A549 (cell line): ENCODE measurements at regions of chr17 and their contacts with region 1.

Region 1: DNA sequence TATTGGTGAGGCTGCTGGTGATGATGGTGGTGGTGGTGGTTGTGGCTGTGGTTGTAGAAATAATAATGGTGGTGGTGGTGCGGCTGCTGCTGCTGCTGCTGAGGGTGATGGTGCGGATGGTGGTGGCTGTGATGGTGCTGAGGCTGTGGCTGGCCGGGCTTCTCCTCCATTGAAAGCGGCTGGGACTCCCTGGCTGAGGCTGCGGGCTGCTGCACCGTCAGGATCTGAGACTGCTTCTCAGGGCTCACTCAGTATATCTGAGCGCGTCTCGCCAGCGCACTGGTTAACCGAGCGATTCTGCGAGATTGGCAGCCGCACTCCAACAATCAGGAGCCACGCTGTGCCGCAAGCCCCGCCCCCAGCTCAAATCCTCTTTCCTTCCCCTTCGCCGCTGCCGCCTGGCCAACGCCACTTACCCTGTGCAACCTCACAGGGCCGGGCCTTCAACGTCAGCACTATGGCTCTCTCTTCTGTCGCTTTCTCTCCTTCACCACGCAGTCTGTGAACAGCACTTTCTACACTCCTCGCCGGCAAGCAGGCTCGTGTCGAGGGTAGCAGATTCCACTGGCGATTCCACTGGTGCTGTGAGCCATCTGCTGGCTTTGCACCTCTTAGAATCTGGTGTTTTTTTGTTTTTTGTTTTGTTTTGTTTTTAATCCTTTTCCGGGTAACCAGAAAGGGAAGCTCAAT is at the start of gene NUFIP2:
- DNase-seq: peak; percentile 99 to 100
- ATAC-seq: peak; percentile 83 to 97
- H3K4me3 ChIP-seq: peak within 1 kb of the TSS; percentile 72
- H3K27ac ChIP-seq: peak within 1 kb of the TSS; percentile 91 to 98
- H3K4me1 ChIP-seq: peaks cover 25% of the 10 kb centered on the region
- CTCF ChIP-seq: no peak
- EP300 ChIP-seq: no peak
- POLR2A ChIP-seq: peak; percentile 99
- RAD21 ChIP-seq: 0 out of 5 replicates have a peak, but pooled peaks have one; percentile 3 to 15
- polyA plus RNA-seq, gene NUFIP2: 29.4 and 34.7 TPM in 2 replicates

Region 2: DNA sequence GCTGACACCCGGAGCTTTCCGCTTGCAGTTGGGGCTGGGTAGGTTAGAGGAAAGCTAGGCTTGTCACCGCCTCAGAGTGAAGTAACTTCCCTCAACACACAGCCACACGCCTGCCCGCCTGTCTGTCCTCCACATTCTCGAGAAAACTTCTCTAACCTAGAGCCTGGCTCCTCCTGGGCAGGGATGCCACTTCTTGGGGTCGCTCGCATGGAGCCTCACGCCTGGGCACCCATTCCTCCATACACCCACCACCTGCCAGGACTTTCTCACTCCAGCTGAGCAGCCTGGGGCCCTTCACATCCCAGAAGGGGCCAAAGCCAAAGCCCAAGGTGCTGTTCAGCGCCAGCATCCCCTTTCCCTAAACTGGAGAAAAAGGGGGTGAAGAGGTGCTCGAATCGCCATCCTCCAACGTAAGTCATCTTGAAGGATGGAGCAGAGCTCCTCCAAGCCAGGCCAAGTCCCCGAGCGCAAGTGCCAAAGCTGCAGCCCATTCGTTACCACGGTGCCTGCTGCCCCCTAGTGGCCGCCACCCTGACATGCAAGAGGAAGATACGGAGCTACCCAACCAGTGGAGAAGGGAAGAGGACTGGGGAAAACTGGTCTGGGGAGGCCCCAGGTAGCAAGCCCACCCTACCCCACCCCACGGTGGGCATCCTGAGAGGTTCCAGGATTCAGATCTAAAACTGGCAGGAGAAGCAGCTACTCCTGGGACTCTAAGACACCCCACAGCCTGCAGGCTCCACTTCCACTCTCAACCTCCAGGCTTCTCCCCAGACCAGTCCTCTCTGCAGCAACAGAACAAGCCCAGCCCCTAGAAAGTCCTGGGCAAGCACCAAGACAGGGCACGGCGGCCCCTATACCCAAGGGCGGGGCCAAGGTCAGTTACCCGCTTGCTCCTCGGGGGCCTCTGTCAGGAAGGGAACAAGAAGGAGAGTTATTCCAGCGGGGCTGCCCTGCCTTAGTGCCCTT is 176.9 kb before region 1 on chr17:
- CTCF ChIA-PET with region 1: interaction called, 14 read pairs
- POLR2A ChIA-PET with region 1: interaction called, 3 read pairs
- DNase-seq: peak; percentile 76 to 82
- ATAC-seq: peak; percentile 65 to 82
- H3K4me3 ChIP-seq: no peak overlapping the region
- H3K27ac ChIP-seq: no peak overlapping the region
- H3K4me1 ChIP-seq: no peaks in the 10 kb centered on the region
- CTCF ChIP-seq: peak; percentile 94
- EP300 ChIP-seq: no peak
- POLR2A ChIP-seq: no peak
- RAD21 ChIP-seq: peak; percentile 75 to 82

Region 3: DNA sequence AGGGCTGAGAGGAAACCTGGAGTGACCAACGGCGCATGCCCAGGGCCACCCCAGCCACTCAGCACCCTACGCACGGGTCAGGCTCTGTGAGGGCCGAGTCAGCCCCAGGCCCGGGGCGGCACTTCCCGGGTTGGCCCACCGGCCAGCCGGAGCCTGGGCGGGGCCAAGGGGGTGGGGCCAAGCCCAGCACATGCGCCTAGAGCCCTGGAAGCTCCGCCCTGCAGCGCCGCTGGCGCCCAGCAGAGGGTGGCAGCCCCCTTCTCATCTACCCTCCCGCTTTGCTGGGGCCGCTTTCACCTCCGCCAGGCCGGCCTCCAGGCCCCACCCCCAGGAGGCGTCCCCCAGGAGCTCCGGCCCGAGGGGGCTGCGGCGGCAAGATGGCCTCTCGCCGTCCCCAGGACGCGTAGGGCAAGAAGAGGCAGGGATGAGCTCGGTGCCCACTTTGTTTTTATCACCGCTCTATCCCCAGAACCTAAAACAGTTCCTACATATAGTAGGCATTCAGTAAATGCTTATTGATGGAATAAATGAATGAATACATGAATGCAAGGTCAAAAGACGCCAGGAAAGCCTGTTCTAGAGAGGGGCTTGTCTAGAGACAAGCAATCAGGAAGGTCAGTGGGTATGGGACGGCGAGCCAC is 145.1 kb before region 1 on chr17:
- CTCF ChIA-PET with region 1: interaction called, 37 read pairs
- POLR2A ChIA-PET with region 1: interaction called, 73 read pairs
- DNase-seq: peak; percentile 92 to 95
- ATAC-seq: peak; percentile 87 to 95
- H3K4me3 ChIP-seq: peak overlapping the region; percentile 44
- H3K27ac ChIP-seq: peak overlapping the region; percentile 82 to 94
- H3K4me1 ChIP-seq: peaks cover 63% of the 10 kb centered on the region
- CTCF ChIP-seq: peak; percentile 98
- EP300 ChIP-seq: no peak
- POLR2A ChIP-seq: peak; percentile 84
- RAD21 ChIP-seq: peak; percentile 96 to 100

Region 4: GRCh38 chr17:29165800-29166513 is 128.1 kb before region 1 on chr17:
- CTCF ChIA-PET with region 1: no interaction called
- POLR2A ChIA-PET with region 1: no interaction called
- DNase-seq: no peak
- ATAC-seq: no peak
- H3K4me3 ChIP-seq: no peak overlapping the region
- H3K27ac ChIP-seq: no peak overlapping the region
- H3K4me1 ChIP-seq: peaks cover 17% of the 10 kb centered on the region
- CTCF ChIP-seq: no peak
- EP300 ChIP-seq: no peak
- POLR2A ChIP-seq: no peak
- RAD21 ChIP-seq: no peak

Region 5: GRCh38 chr17:29241015-29241963 is 52.7 kb before region 1 on chr17:
- CTCF ChIA-PET with region 1: interaction called, 57 read pairs
- POLR2A ChIA-PET with region 1: interaction called, 17 read pairs
- DNase-seq: peak; percentile 96 to 97
- ATAC-seq: peak; percentile 95 to 98
- H3K4me3 ChIP-seq: no peak overlapping the region
- H3K27ac ChIP-seq: peak overlapping the region; percentile 93
- H3K4me1 ChIP-seq: peaks cover 49% of the 10 kb centered on the region
- CTCF ChIP-seq: no peak
- EP300 ChIP-seq: peak in 1 of 2 experiments; percentile 71; a peak in 1 of 5 replicates
- POLR2A ChIP-seq: no peak
- RAD21 ChIP-seq: peak; percentile 27 to 45; a peak in 2 of 5 replicates

Region 6: GRCh38 chr17:29252101-29252866 is 41.8 kb before region 1 on chr17:
- CTCF ChIA-PET with region 1: interaction called, 46 read pairs
- POLR2A ChIA-PET with region 1: interaction called, 12 read pairs
- DNase-seq: peak; percentile 59 to 63
- ATAC-seq: peak; percentile 58 to 60; a peak in 5 of 6 replicates
- H3K4me3 ChIP-seq: no peak overlapping the region
- H3K27ac ChIP-seq: no peak overlapping the region; a peak in 1 of 6 replicates
- H3K4me1 ChIP-seq: peaks cover 34% of the 10 kb centered on the region
- CTCF ChIP-seq: peak; percentile 49
- EP300 ChIP-seq: no peak
- POLR2A ChIP-seq: no peak
- RAD21 ChIP-seq: peak; percentile 15 to 46; a peak in 2 of 5 replicates

Region 7: DNA sequence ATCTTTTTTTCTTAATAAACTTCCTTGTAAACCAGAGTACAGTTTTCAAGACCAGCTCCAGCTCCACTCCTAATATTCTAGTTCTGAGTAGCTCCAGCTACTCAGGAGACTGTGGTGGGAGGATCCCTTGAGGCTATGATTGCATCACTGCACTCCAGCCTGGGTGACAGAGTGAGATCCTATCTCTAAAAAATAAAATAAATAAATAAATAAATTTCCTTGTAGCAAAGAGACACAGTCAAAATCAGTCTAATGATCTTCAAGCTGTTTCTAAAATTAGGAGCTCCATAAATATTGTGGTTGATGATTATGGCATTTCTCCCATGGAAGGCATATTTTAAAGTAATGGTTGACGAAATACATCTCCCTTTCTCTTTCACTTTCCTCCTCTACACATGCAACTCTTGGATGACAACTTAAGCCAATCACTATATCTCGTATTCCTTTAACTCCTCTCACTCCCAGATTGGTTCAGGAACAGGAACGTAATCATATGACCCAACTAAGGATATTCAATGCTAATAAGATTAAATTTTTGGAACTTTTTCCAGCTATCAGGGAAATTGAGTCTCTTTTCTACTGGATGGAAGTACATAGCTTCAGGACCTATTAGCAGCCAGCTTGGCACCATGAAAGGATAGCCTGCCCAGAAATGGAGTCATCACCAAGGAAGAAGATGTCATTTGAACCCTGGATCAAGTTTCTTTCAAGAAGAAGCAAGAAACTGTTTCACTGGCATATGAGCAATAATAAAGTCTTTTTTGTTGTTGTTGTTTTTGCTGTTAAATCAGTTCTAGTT is 54.0 kb after region 1 on chr17:
- CTCF ChIA-PET with region 1: interaction called, 6 read pairs
- POLR2A ChIA-PET with region 1: interaction called, 10 read pairs
- DNase-seq: no peak
- ATAC-seq: no peak
- H3K4me3 ChIP-seq: no peak overlapping the region
- H3K27ac ChIP-seq: no peak overlapping the region
- H3K4me1 ChIP-seq: no peaks in the 10 kb centered on the region
- CTCF ChIP-seq: no peak
- EP300 ChIP-seq: no peak
- POLR2A ChIP-seq: no peak
- RAD21 ChIP-seq: no peak

Region 8: GRCh38 chr17:29389982-29390850 is 96.2 kb after region 1 on chr17 and contains the start of gene TAOK1:
- CTCF ChIA-PET with region 1: no interaction called
- POLR2A ChIA-PET with region 1: interaction called, 15 read pairs
- DNase-seq: peak; percentile 95 to 99
- ATAC-seq: peak; percentile 93
- H3K4me3 ChIP-seq: peak within 1 kb of the TSS; percentile 79
- H3K27ac ChIP-seq: peak within 1 kb of the TSS; percentile 96 to 98
- H3K4me1 ChIP-seq: peaks cover 27% of the 10 kb centered on the region
- CTCF ChIP-seq: no peak
- EP300 ChIP-seq: no peak
- POLR2A ChIP-seq: peak; percentile 93
- RAD21 ChIP-seq: no peak; a peak in 1 of 5 replicates
- polyA plus RNA-seq, gene TAOK1: 46.7 and 47.1 TPM in 2 replicates

Region 9: GRCh38 chr17:29451121-29451742 is 157.2 kb after region 1 on chr17:
- CTCF ChIA-PET with region 1: no interaction called
- POLR2A ChIA-PET with region 1: no interaction called
- DNase-seq: no peak
- ATAC-seq: no peak; a peak in 1 of 6 replicates
- H3K4me3 ChIP-seq: no peak overlapping the region
- H3K27ac ChIP-seq: no peak overlapping the region
- H3K4me1 ChIP-seq: peaks cover 9% of the 10 kb centered on the region; the same call in 2 of the 3 replicates
- CTCF ChIP-seq: no peak
- EP300 ChIP-seq: no peak
- POLR2A ChIP-seq: no peak
- RAD21 ChIP-seq: no peak